HEK293T (cell line): ENCODE measurements at regions of chr12 and their contacts with region 1.

Region 1: DNA sequence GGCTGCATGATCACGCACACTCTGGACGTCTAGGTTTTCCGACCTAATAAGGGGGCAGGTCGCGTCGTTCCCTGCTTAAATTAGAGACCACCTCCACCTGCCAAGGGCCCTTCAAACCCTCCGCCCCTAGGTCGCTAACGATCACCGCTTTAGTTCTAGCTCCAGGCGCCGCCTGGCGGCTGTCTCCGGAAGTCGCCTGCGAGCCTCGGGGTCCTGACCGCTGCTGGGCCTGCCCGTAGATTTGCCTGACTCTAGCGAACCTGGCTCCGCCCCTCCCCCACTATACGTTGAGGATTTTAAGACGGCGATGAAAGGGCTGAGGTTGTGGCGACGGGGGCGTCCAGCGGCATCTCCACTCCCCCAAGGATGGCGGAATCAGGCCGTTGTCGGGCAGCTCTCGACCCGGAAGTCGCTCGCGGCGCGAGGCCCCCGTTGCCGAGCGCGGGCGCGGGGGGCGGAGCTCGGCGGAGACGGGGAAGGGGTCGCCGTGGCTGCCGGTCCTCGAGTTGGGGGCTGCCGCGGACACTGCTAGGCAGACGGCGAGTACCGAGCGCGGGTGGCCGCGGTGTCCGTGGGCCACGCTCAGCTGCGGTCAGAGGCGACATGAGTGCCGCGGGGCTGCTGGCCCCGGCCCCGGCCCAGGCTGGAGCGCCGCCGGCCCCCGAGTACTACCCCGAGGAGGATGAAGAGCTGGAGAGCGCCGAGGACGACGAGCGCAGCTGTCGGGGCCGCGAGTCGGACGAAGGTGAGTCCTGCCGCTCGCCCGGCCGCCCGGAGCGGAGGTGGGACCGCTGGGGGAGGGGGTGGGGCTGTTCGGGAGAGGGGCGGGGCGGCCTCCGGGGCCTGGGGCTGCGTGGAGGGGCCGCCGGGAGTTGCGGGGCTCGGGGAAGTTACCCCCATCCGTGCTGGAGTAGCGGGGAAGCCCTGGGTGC is at the start of gene SUDS3:
- DNase-seq: peak; percentile 79

Region 2: DNA sequence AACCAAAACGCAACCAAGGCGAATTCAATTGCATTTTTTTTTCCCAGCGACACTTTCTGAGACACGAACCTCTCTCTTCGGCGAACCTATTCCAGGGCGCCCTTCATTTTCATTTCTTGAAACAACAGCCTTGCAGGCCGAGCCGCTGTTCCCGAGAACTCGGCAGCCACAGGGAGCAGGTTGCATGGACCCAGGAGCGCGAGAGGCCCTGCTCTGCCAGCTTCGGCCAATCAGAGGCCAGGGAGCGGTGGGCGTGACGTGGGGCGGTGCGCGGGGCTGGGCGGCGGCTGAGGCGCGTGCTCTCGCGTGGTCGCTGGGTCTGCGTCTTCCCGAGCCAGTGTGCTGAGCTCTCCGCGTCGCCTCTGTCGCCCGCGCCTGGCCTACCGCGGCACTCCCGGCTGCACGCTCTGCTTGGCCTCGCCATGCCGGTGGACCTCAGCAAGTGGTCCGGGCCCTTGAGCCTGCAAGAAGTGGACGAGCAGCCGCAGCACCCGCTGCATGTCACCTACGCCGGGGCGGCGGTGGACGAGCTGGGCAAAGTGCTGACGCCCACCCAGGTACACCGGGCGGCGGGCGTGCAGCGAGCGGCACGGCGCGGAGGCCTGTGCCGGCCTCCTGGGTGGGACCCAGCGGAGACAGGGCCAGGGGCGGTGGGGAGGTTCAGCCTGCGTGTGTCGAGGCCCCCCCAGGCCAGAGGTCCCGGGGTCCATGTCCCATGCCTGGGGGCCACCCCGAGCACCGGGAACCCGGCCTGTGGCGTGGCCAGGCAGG is 240.4 kb before region 1 on chr12 and contains the start of gene PEBP1:
- CTCF ChIA-PET with region 1: interaction called, 3 read pairs
- POLR2A ChIA-PET with region 1: interaction called, 12 read pairs
- DNase-seq: peak; percentile 92

Region 3: DNA sequence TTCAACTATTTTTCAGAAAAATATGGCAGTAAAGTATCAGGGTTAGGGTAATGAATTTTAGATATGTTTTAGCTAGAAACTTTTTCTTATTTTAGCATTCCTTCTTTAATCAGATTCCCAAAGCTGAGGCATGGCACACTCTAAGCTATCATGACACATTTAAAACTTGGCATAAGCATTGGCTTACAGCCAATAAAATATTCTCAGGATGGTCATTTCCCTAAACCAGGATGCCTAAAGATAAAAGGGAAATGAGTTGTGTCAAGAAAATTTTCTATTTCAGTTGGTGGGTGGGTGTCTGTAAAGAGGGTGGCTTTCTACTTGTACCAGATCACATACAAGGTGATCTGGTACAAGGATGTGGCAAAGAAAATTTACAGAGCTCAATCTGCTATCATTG is 192.7 kb before region 1 on chr12:
- CTCF ChIA-PET with region 1: interaction called, 12 read pairs
- POLR2A ChIA-PET with region 1: interaction called, 6 read pairs
- DNase-seq: no peak